ENCODE measurements at regions of chr16 and their contacts with region 1.

Region 1: GRCh38 chr16:68116256-68116867 is 31.2 kb downstream of the NFATC3 start:
- ATAC-seq: peak in 3 of 8 experiments; percentile 61 to 72 (median 68)
- H3K4me3 ChIP-seq: no peak overlapping the region
- H3K27ac ChIP-seq: no peak overlapping the region
- H3K4me1 ChIP-seq: no peaks in the 10 kb centered on the region

Region 2: DNA sequence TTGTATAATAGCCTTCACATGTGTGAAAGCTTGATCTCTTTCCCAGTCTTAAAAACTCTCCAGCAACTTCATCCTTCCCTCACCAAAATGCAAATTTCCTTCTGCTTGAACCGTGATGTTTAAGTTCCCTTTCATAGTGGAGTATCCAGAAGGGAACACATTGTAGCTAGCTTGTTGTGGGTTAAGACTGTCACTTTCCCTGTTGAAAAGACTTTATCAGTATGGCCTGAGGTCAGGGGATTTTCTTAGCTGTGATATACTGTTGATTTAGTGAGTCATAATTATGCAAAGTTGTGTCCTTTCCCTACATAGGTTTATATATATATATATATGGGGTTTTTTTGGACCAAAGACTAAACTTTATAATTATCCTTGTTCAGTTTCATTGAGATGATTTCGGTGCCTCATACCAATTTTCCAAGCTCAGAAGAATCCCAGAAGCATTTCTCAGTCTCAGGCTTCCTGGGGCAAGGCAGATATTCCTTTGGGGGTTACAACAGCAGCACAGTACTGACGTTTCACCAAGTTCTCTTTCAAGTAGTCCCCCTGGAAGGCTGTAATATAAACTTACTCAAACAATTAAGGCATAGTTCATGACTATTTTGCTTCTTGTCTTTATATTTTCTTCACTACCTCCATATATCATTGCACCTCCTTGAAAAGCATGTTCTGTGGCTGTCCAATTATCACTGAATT is 83.9 kb after region 1 on chr16:
- in situ Hi-C with region 1: loop called in 1 of 9 experiments (anchors 25 kb)
- ATAC-seq: peak in 3 of 8 experiments; percentile 37 to 88 (median 44)
- H3K4me3 ChIP-seq: no peak overlapping the region
- H3K27ac ChIP-seq: no peak overlapping the region
- H3K4me1 ChIP-seq: no peaks in the 10 kb centered on the region

Region 3: DNA sequence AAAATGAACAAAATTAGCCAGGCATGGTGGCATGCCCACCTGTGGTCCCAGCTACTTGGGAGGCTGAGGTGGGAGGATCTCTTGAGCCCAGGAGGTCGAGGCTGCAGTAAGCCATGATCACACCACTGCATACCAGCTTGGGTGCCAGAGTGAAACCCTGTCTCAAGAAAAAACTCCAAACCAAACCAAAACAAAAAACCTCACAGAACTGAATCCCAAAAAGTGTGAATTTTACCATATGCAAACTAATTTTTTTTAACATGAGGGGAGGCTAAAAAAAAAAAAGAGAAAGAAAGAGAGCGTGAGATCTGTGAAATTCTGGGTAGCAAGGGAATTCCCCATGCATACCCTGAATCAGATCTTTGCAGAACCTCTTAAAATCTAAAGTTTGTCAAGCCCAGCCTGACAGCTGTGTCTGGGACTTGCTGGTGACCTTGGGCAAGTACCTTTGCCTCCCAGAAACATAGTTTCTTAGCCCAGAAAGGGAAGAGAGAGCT is 603.7 kb after region 1 on chr16:
- in situ Hi-C with region 1: no loop called
- ATAC-seq: no peak
- H3K4me3 ChIP-seq: no peak overlapping the region
- H3K27ac ChIP-seq: no peak overlapping the region
- H3K4me1 ChIP-seq: no peaks in the 10 kb centered on the region

Measured in motor neuron (in vitro differentiated cells).